HCT116 (cell line): ENCODE measurements at regions of chr19 and their contacts with region 1.

Region 1: GRCh38 chr19:15264061-15264932 is 32.0 kb upstream of the EPHX3 start:
- DNase-seq: peak; percentile 45
- ATAC-seq: peak; percentile 80
- H3K4me3 ChIP-seq: no peak overlapping the region
- H3K27ac ChIP-seq: no peak overlapping the region
- H3K4me1 ChIP-seq: no peaks in the 10 kb centered on the region
- H3K27me3 ChIP-seq: no peaks in the 10 kb centered on the region
- CTCF ChIP-seq: peak; percentile 81 to 90 (median 87); a peak in 5 of 6 replicates
- POLR2A ChIP-seq: no peak
- RAD21 ChIP-seq: peak; percentile 90

Region 2: GRCh38 chr19:15125232-15126067 is 138.8 kb before region 1 on chr19:
- CTCF ChIA-PET with region 1: no interaction called
- POLR2A ChIA-PET with region 1: no interaction called
- RAD21 ChIA-PET with region 1: no interaction called
- intact Hi-C with region 1: no loop called
- DNase-seq: peak; percentile 97
- ATAC-seq: peak; percentile 92
- H3K4me3 ChIP-seq: peak overlapping the region; percentile 82 to 90
- H3K27ac ChIP-seq: peak overlapping the region; percentile 76
- H3K4me1 ChIP-seq: peaks cover 11 to 29% of the 10 kb centered on the region in 2 experiments; a peak in 3 of 4 replicates
- H3K27me3 ChIP-seq: no peaks in the 10 kb centered on the region
- CTCF ChIP-seq: no peak
- POLR2A ChIP-seq: no peak
- RAD21 ChIP-seq: no peak

Region 3: GRCh38 chr19:15177269-15178116 is 86.8 kb before region 1 on chr19:
- CTCF ChIA-PET with region 1: no interaction called
- POLR2A ChIA-PET with region 1: no interaction called
- RAD21 ChIA-PET with region 1: no interaction called
- intact Hi-C with region 1: loop called (anchors 2 kb)
- DNase-seq: no peak
- ATAC-seq: peak; percentile 89
- H3K4me3 ChIP-seq: no peak overlapping the region
- H3K27ac ChIP-seq: no peak overlapping the region
- H3K4me1 ChIP-seq: peaks cover 0 to 3% of the 10 kb centered on the region in 2 experiments; a peak in 1 of 4 replicates
- H3K27me3 ChIP-seq: no peaks in the 10 kb centered on the region
- CTCF ChIP-seq: peak; percentile 64 to 78 (median 75)
- POLR2A ChIP-seq: no peak
- RAD21 ChIP-seq: peak; percentile 88

Region 4: DNA sequence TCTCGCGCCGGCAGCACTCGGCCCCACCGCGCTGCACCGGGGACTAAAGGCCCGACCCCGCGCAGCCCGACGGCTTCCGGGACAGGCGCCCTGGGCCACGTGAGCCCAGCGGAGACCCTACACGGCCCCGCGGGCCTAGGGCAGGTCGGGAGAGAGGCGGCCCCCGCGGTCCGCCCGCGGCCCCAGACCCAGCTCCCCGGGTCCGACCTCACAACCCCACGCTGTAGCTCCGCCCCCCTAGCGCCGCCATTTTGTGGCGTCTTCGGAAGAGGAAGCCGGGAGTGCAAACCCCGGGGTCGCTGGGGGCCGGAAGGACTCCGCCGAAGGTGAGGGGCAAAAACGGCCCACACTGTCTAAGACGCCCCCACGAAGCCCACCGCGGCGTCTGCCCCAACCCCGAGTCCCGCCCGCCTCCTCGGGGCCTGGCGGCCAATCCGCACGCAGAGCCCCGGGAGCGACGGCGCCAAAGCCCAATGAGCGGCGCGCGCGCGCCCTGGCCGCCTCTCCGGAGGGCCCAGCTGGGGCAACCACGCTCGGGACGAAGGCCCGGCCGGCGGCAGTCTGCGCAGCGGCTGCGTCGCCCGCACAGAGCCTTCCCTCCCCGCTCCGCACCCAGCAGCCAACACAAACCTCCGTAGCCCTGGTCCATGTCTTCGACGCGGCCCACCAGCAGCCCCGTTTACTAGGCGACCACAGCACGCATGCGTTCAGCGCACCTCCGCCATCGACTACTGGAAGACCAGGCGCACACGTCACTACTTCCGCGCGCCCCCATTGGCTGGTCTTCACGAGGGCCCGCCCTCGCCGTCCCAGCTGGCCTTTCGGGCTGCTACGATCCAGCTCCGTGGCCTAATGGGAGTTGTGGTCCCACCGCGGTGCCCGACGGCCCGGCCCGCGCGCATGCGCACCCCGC is 115.0 kb after region 1 on chr19 and contains the start of gene AKAP8:
- CTCF ChIA-PET with region 1: interaction called, 3 read pairs
- POLR2A ChIA-PET with region 1: interaction called, 3 read pairs
- RAD21 ChIA-PET with region 1: no interaction called
- intact Hi-C with region 1: loop called (anchors 10 kb)
- DNase-seq: peak; percentile 96
- ATAC-seq: peak; percentile 89
- H3K4me3 ChIP-seq: peak within 1 kb of the TSS; percentile 83 to 100
- H3K27ac ChIP-seq: peak within 1 kb of the TSS; percentile 96
- H3K4me1 ChIP-seq: peaks cover 13 to 33% of the 10 kb centered on the region in 2 experiments
- H3K27me3 ChIP-seq: no peaks in the 10 kb centered on the region
- CTCF ChIP-seq: no peak
- POLR2A ChIP-seq: peak; percentile 42
- RAD21 ChIP-seq: no peak
- total RNA-seq, gene AKAP8: 50.6 TPM

Region 5: GRCh38 chr19:15516363-15516762 is 252.1 kb after region 1 on chr19:
- CTCF ChIA-PET with region 1: no interaction called
- POLR2A ChIA-PET with region 1: no interaction called
- RAD21 ChIA-PET with region 1: no interaction called
- intact Hi-C with region 1: no loop called
- DNase-seq: no peak
- ATAC-seq: no peak
- H3K4me3 ChIP-seq: no peak overlapping the region
- H3K27ac ChIP-seq: no peak overlapping the region
- H3K4me1 ChIP-seq: no peaks in the 10 kb centered on the region
- H3K27me3 ChIP-seq: no peaks in the 10 kb centered on the region
- CTCF ChIP-seq: no peak
- POLR2A ChIP-seq: no peak
- RAD21 ChIP-seq: no peak